Calu3 (cell line): ENCODE measurements at regions of chr17 and their contacts with region 1.

Region 1: GRCh38 chr17:39352511-39352910 is 48.9 kb downstream of the FBXL20 start:
- DNase-seq: no peak
- H3K4me3 Mint-ChIP-seq: no peak overlapping the region
- H3K27ac Mint-ChIP-seq: peak overlapping the region; percentile 96
- H3K4me1 Mint-ChIP-seq: peaks cover 41% of the 10 kb centered on the region
- H3K27me3 Mint-ChIP-seq: no peaks in the 10 kb centered on the region
- CTCF ChIP-seq: peak; percentile 59

Region 2: DNA sequence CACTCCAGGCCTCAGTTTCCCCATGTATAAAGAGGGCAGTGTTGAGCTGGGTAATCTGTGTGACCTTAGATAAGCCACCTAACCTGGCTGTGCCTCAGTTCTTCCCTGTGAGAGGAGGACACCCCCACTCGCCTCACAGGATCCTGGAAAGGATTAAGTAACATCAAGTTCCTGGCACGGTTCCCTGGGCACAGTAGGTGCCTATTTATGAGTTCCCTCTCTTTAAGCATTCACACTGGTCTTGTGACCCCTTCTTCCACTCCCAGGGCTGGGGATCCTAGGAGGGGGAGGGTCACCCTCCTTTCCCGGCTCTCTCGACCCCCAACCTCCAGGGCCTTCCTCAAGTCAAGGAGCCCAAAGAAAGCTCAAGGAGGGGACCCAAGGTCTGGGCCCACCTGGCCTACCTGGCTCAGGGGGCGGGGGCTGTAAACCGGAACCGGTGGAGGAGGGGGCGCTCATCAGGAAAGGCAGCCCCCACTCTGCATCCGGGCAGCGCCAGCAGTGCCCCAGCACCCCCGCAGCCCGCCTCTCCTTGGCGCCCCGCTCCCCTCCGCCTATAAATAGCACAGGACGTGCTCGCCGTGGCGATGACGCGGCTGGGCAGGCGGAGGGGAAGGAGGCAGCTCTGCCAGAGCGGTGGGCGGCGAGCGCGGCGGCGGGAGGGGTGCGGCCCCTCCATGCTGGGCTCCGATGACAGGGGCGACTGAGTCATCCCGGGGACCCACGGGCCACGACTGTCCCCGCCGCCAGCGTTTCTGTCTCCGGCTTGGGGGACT is 143.0 kb before region 1 on chr17:
- CTCF ChIA-PET with region 1: interaction called, 31 read pairs
- intact Hi-C with region 1: no loop called
- DNase-seq: peak; percentile 81
- H3K4me3 Mint-ChIP-seq: peak overlapping the region; percentile 55
- H3K27ac Mint-ChIP-seq: peak overlapping the region; percentile 16
- H3K4me1 Mint-ChIP-seq: peaks cover 43% of the 10 kb centered on the region
- H3K27me3 Mint-ChIP-seq: peaks cover 63% of the 10 kb centered on the region
- CTCF ChIP-seq: peak; percentile 13

Region 3: GRCh38 chr17:39235555-39236449 is 116.7 kb before region 1 on chr17:
- CTCF ChIA-PET with region 1: interaction called, 12 read pairs
- intact Hi-C with region 1: no loop called
- DNase-seq: peak; percentile 88
- H3K4me3 Mint-ChIP-seq: no peak overlapping the region
- H3K27ac Mint-ChIP-seq: no peak overlapping the region
- H3K4me1 Mint-ChIP-seq: peaks cover 49% of the 10 kb centered on the region
- H3K27me3 Mint-ChIP-seq: peaks cover 28% of the 10 kb centered on the region
- CTCF ChIP-seq: peak; percentile 100

Region 4: GRCh38 chr17:39270923-39271322 is 81.6 kb before region 1 on chr17:
- CTCF ChIA-PET with region 1: interaction called, 33 read pairs
- intact Hi-C with region 1: loop called (anchors 1 kb)
- DNase-seq: peak; percentile 72
- H3K4me3 Mint-ChIP-seq: no peak overlapping the region
- H3K27ac Mint-ChIP-seq: peak overlapping the region; percentile 26
- H3K4me1 Mint-ChIP-seq: no peaks in the 10 kb centered on the region
- H3K27me3 Mint-ChIP-seq: no peaks in the 10 kb centered on the region
- CTCF ChIP-seq: peak; percentile 58

Region 5: GRCh38 chr17:39281806-39282205 is 70.7 kb before region 1 on chr17:
- CTCF ChIA-PET with region 1: interaction called, 26 read pairs
- intact Hi-C with region 1: loop called (anchors 2 kb)
- DNase-seq: no peak
- H3K4me3 Mint-ChIP-seq: no peak overlapping the region
- H3K27ac Mint-ChIP-seq: peak overlapping the region; percentile 45
- H3K4me1 Mint-ChIP-seq: peaks cover 14% of the 10 kb centered on the region
- H3K27me3 Mint-ChIP-seq: no peaks in the 10 kb centered on the region
- CTCF ChIP-seq: no peak

Region 6: DNA sequence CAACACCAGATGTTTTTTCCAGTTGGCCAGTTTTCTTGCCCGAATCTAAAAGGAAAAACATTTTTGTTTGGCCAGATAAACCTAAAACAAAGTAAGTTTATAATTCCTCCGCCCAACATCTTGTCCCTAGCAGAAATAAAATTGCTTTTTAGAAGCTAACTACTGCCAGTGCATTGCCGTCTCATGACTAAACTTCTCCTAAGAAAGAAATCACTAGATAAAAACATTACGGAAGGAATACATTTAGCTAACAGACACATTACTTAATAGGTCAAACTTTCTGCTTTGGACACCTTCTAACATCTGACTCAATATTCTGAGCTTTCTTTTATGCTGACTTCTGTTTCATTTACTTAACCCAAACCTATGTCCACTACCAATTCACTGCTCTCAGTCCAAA is 12.7 kb after region 1 on chr17:
- CTCF ChIA-PET with region 1: interaction called, 13 read pairs
- intact Hi-C with region 1: no loop called
- DNase-seq: no peak
- H3K4me3 Mint-ChIP-seq: no peak overlapping the region
- H3K27ac Mint-ChIP-seq: no peak overlapping the region
- H3K4me1 Mint-ChIP-seq: no peaks in the 10 kb centered on the region
- H3K27me3 Mint-ChIP-seq: no peaks in the 10 kb centered on the region
- CTCF ChIP-seq: no peak

Region 7: DNA sequence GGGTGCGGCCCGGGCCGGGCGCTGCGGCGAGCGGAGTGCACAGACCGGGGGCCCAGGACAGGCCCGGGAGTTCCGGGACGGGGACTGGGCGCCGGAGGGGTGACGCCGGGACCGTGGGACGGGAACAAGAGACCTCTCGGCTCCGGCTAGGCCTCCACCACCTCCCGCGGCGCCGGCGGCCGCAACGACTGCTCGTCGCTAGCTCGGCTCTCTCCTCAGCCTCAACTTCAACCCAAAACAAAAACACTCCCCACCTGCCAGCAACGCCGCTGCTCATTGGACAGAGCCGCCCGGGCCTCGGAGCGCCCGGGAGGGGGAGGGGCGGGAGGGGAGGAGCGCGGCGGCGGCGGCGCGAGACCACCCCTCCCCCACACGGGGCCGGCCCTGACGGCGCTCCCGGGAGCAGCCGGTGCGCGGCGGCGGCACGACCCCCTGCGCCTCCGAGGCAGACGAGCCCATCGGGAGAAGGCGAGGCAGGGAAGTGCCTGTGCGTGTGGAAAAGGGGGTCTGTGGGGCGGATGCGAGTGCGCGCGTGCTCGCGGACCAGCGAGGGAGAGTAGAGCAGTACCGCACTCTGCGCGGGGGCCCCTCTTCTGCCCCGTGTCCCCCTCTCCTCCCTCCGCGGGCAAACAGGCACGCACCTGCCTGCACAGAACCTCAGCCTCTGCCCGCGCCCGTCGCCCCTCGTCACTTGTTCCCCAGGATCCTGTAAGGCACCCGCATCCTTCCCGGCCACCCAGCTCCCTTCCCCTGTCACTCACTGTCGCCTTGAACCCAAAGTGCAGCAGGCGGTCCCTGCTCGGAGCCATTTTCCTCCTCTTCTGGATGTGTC is 49.1 kb after region 1 on chr17 and contains the start of gene FBXL20:
- CTCF ChIA-PET with region 1: interaction called, 21 read pairs
- intact Hi-C with region 1: loop called (anchors 2 kb)
- DNase-seq: peak; percentile 100
- H3K4me3 Mint-ChIP-seq: peak within 1 kb of the TSS; percentile 89
- H3K27ac Mint-ChIP-seq: peak within 1 kb of the TSS; percentile 98
- H3K4me1 Mint-ChIP-seq: peaks cover 40% of the 10 kb centered on the region
- H3K27me3 Mint-ChIP-seq: no peaks in the 10 kb centered on the region
- CTCF ChIP-seq: no peak
- total RNA-seq, gene FBXL20: 70.3 and 71.5 TPM in 2 replicates

Region 8: DNA sequence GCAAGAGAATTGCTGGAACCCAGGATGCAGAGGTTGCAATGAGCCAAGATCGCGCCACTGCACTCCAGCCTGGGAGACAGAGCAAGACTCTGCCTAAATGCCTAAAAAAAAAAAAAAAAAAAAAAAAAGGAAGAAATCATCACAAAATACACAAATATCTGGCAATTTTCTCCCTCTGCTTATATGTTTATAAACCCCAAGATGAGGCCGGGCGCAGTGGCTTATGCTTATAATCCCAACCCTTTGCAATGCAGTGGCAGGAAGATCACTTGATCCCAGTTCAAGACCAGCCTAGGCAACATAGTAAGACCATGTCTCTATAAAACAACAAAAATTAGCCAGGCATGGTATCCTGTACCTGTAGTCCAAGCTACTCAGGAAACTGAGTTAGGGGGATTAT is 77.1 kb after region 1 on chr17:
- CTCF ChIA-PET with region 1: no interaction called
- intact Hi-C with region 1: no loop called
- DNase-seq: no peak
- H3K4me3 Mint-ChIP-seq: no peak overlapping the region
- H3K27ac Mint-ChIP-seq: no peak overlapping the region
- H3K4me1 Mint-ChIP-seq: no peaks in the 10 kb centered on the region
- H3K27me3 Mint-ChIP-seq: no peaks in the 10 kb centered on the region
- CTCF ChIP-seq: no peak